ENCODE measurements at regions of chr19 and their contacts with region 1.

Region 1: DNA sequence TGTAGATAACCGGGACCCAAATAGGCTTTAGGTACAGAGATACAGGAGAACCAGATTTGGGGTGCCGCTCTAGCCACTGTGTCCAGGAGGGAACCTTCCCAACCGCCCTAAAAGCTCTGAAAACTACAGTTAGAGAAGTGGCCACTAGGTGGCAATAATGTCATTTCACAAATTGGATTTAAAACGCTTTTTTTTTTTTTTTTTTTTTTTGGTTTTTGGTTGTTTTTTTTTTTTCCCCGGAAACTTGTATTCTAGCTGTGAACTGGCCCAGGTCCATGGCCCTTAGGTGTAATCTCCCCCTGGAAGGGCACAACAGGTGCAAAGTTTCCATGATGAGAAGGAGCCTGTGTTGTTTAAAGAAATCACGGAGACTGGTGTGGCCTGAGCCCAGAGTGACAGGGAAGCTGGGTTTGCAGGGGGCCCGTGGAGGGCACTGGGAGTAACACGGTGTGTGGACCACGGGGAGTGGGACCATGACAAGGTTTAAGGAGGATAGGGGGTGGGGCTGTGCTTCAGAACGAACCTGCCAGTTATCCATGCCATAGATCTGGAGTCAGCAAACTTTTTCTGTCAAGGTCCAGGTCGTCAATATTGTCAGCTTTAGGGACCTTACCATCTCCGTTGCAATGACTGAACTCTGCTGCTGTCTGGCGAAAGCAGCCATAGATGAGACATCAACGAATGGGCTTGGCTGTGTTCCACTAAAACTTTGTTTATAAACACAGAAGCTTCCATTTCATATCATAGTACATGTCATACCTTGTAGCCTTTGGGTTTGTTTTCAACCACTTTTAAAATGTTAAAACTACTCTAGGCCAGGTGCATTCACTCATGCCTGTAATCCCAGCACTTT is 10.1 kb downstream of the OR1I1 start:
- DNase-seq: peak; percentile 61
- ATAC-seq: peak; percentile 63
- H3K4me3 Mint-ChIP-seq: no peak overlapping the region
- H3K27ac Mint-ChIP-seq: no peak overlapping the region
- H3K4me1 Mint-ChIP-seq: peaks cover 3% of the 10 kb centered on the region
- H3K27me3 Mint-ChIP-seq: no peaks in the 10 kb centered on the region

Region 2: DNA sequence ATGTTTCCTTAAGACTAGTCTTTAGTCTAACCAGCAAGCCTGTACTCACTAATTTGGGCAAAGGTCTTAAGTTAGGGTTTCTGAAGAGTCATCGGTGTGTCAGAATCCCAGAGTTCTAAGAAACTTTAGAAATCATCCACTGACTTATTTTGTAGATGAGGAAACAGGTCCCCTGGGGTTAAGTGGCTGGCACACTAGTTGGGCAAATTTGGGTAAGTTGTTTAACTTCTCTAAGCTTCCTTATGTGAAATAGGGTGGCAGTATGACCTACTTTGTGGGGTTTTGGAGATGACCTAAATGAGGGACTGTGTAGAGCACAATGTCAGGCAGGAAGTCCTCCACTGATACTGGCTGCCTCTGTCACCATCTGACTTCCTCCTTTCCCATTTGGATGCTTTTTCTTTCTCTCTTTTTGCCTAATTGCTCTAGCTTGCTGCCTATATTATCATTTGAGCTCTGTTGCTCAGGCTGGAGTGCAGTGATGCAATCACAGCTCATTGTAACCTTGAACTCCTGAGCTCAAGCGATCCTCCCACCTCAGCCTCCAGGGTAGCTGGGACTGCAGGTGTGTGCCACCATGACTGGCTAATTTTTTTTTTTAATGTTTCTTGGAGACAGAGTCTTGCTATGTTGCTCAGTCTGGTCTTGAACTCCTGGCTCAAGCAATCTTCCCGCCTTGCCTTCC is 419.8 kb before region 1 on chr19:
- CTCF ChIA-PET with region 1: no interaction called
- DNase-seq: no peak
- ATAC-seq: no peak
- H3K4me3 Mint-ChIP-seq: no peak overlapping the region
- H3K27ac Mint-ChIP-seq: no peak overlapping the region
- H3K4me1 Mint-ChIP-seq: peaks cover 9% of the 10 kb centered on the region
- H3K27me3 Mint-ChIP-seq: peaks cover 27% of the 10 kb centered on the region

Region 3: GRCh38 chr19:14985133-14985532 is 107.0 kb before region 1 on chr19:
- CTCF ChIA-PET with region 1: no interaction called
- DNase-seq: no peak
- ATAC-seq: no peak
- H3K4me3 Mint-ChIP-seq: no peak overlapping the region
- H3K27ac Mint-ChIP-seq: no peak overlapping the region
- H3K4me1 Mint-ChIP-seq: no peaks in the 10 kb centered on the region
- H3K27me3 Mint-ChIP-seq: peaks cover 14% of the 10 kb centered on the region

Region 4: DNA sequence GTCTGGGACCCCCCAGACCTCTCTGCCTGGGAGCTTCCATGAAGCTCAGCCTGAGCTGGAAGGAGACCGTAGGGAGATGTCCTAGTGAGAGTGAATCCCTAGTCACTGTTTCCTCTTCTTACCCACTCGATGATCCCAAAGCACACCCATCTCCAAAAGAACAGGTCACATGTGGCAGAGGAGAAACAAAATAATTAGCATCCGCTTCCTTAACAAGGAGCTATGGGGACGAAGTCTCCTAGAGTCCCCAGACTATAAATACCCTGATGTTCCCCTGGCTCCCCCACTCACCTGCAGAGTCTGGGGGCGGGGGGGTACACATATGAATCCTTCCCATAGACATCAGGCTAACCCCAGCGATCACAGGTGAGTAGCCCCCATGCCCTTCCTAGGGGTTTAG is 10.2 kb before region 1 on chr19 and contains the start of gene OR1I1:
- CTCF ChIA-PET with region 1: interaction called, 14 read pairs
- DNase-seq: no peak
- ATAC-seq: no peak
- H3K4me3 Mint-ChIP-seq: no peak within 1 kb of the TSS
- H3K27ac Mint-ChIP-seq: no peak within 1 kb of the TSS
- H3K4me1 Mint-ChIP-seq: no peaks in the 10 kb centered on the region
- H3K27me3 Mint-ChIP-seq: peaks cover 6% of the 10 kb centered on the region
- total RNA-seq, gene OR1I1: not detected

Region 5: GRCh38 chr19:15146691-15147489 is 54.8 kb after region 1 on chr19:
- CTCF ChIA-PET with region 1: interaction called, 68 read pairs
- DNase-seq: no peak
- ATAC-seq: no peak
- H3K4me3 Mint-ChIP-seq: no peak overlapping the region
- H3K27ac Mint-ChIP-seq: no peak overlapping the region
- H3K4me1 Mint-ChIP-seq: no peaks in the 10 kb centered on the region
- H3K27me3 Mint-ChIP-seq: no peaks in the 10 kb centered on the region

Region 6: DNA sequence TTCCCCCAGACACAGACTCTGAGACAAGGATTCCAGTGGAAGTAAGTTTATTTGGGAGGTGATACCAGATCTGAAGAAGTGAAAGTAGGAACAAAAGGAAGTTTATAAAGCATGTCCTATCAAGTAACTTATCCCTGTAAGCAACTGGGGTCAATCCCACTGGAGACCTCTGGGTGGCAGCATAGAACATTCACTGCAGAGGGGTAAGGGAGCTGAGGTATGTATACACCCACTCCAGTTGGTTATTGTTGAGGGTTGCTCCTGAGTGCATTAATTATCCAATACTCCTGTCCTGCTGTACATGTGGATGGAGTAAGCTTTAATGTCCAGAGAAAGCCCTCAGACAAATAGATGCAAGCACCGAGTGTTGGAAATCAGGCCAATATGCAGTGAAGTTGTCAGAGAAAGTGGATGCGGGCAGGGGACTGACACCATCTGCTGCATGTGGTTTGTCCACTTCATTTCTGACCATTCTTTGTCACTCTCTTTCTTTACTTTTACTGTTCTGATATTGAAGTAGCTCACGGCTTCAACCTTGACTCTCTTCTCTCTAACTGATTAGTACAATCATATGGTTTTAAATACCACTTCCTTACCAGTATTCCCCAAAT is 62.0 kb after region 1 on chr19:
- CTCF ChIA-PET with region 1: interaction called, 68 read pairs
- DNase-seq: peak; percentile 55
- ATAC-seq: no peak
- H3K4me3 Mint-ChIP-seq: no peak overlapping the region
- H3K27ac Mint-ChIP-seq: no peak overlapping the region
- H3K4me1 Mint-ChIP-seq: no peaks in the 10 kb centered on the region
- H3K27me3 Mint-ChIP-seq: peaks cover 8% of the 10 kb centered on the region